PC-3 (cell line): ENCODE measurements at regions of chr13 and their contacts with region 1.

Region 1: DNA sequence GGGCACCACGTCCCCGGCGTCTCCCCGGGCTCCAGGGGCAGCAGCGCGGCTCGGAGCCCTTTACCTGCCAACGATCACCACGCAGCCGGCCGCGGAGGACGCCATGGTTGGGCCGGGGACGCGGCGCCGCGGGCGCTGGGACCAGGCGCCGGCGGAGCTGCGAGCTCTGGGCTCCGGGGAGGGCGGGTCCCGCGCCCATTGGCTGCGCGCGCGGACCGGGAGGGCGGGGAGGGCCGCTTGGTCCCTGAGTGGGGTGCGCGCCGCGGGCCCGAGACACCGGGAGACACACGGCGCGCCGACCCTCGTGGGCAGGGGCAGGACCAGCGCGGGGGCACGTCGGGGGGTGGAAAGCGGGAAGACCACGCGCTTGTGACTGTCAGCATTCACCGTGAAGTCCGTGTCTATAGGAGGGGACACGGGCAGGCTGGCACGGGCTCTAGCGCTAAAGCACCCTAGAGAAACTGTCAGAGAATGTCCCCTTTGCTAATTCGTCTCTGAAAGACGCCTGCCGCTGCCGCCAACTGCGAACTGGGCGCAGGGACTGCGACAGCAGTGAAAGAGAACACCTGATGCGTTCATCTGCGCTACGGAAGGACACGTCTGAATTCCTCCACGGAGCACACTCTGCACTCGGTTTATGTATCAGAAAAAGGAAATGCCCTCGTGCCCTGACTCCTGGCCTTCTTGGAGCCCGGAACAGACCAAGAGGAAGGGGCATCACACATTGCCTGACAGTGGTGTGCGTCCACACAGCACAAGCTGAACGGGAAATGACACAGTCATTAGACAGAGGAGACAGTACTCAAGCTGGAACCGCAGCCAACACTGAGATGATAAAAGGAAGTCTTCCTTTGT is at the start of gene CRYL1:
- DNase-seq: peak; percentile 83
- ATAC-seq: peak; percentile 91
- H3K4me3 ChIP-seq: peak within 1 kb of the TSS; percentile 94
- H3K27ac ChIP-seq: peak within 1 kb of the TSS; percentile 73
- H3K4me1 ChIP-seq: peaks cover 13% of the 10 kb centered on the region
- H3K27me3 ChIP-seq: no peaks in the 10 kb centered on the region
- CTCF ChIP-seq: no peak
- total RNA-seq, gene CRYL1: 13.6 and 20.8 TPM in 2 replicates

Region 2: DNA sequence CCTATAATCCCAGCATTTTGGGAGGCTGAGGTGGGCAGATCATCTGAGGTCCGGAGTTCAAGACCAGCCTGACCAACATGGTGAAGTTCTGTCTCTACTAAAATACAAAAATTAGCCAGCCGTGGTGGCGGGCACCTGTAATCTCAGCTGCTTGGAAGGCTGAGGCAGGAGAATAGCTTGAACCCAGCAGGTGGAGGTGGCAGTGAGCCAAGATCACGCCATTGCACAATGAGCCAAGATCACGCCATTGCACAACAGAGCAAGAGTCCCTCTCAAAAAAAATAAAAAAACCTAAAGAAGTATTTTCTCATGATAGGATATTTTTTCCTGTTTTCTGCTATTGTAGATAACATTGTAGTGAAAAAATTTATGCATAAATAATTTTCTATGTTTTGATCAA is 54.3 kb after region 1 on chr13:
- CTCF ChIA-PET with region 1: no interaction called
- POLR2A ChIA-PET with region 1: no interaction called
- intact Hi-C with region 1: no loop called
- DNase-seq: no peak
- ATAC-seq: no peak
- H3K4me3 ChIP-seq: no peak overlapping the region
- H3K27ac ChIP-seq: no peak overlapping the region
- H3K4me1 ChIP-seq: no peaks in the 10 kb centered on the region
- H3K27me3 ChIP-seq: no peaks in the 10 kb centered on the region
- CTCF ChIP-seq: no peak

Region 3: DNA sequence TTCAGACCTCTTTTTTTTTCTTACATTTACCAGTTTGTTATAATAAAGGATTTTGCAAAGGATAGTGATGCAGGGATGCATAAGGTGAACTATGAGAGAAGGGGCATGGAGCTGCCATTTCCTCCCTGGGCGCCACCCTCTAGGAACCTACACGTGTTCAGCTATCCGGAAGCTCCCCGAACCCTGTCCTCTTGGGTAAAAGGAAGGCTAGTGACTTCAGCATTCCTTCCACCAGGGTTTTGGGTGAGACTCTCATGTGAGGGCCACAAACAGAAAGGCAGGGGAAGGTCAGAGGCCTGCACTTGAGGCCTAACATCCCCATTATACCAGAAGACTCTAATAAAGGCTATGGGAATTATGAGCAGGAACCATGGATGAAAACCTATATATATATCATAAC is 98.3 kb after region 1 on chr13:
- CTCF ChIA-PET with region 1: no interaction called
- POLR2A ChIA-PET with region 1: interaction called, 31 read pairs
- intact Hi-C with region 1: no loop called
- DNase-seq: no peak
- ATAC-seq: no peak
- H3K4me3 ChIP-seq: no peak overlapping the region
- H3K27ac ChIP-seq: no peak overlapping the region
- H3K4me1 ChIP-seq: no peaks in the 10 kb centered on the region
- H3K27me3 ChIP-seq: no peaks in the 10 kb centered on the region
- CTCF ChIP-seq: no peak